ENCODE measurements at regions of chr7 and their contacts with region 1.

Region 1: DNA sequence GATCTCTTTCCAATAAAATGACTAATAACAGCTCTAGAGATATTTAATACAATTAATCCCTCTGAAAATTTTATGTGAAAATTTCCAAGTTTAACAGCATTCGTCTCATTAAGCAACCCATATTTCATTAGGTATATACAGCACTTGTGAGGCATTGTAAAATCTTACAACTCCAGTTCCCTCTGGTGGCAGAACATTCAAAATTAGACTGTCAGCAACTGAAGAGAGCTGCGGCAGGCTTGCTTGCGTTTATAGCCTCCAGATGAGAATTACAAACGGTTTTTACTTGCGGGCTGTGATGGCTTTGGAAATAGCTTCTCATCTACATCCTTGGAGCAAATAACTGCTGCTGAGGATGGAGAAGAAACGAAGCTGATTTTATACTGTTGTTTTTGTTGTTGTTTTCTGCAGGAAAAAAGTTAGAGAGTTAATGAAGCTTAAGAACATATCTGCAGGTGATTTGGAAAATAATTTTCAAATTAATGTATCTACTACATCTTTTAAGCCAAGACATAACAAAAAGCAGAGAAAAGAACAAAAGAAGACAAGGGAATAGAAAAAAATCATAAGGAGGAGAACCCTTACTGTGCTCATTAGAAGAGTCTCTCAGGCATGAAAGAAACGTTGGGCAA is 171.3 kb downstream of the MAGI2 start:
- DNase-seq: peak; percentile 39
- H3K4me3 ChIP-seq: peak overlapping the region; percentile 8; the same call in 1 of the 2 replicates
- H3K27ac ChIP-seq: peak overlapping the region; percentile 69
- H3K27me3 ChIP-seq: no peaks in the 10 kb centered on the region
- CTCF ChIP-seq: peak; percentile 62

Region 2: GRCh38 chr7:79096361-79096805 is 185.8 kb before region 1 on chr7:
- CTCF ChIA-PET with region 1: no interaction called
- POLR2A ChIA-PET with region 1: no interaction called
- DNase-seq: no peak
- H3K4me3 ChIP-seq: no peak overlapping the region
- H3K27ac ChIP-seq: no peak overlapping the region
- H3K27me3 ChIP-seq: no peaks in the 10 kb centered on the region
- CTCF ChIP-seq: no peak

Region 3: GRCh38 chr7:79272066-79272669 is 10.0 kb before region 1 on chr7:
- CTCF ChIA-PET with region 1: interaction called, 17 read pairs
- POLR2A ChIA-PET with region 1: no interaction called
- DNase-seq: no peak
- H3K4me3 ChIP-seq: no peak overlapping the region
- H3K27ac ChIP-seq: no peak overlapping the region
- H3K27me3 ChIP-seq: no peaks in the 10 kb centered on the region
- CTCF ChIP-seq: peak; percentile 65

Region 4: DNA sequence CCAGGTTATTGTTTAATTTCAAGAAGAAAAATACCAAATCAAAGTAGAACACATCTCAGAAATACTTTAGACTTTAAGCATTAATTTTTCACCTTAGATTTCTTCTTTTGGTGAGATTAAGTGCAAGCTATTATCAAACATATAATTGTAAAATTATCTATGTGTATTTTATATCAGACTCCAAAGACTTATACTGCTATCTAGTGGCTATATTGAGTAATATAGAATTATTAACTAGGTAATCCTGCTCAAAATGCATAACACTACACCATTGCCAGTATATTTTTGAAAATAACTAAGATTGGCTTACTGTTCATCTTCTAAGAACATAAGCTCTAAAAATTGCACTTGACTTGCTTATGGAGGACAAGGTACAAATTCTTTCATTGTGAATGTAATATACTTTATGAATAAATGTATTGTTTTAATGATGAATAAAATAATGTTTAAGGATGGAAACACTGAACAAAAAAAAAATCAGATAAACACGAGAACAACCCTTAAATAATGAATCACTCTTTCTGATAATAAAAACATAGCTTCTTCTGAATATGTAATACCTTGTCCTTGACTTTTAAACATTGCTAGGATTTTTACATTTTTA is 765.8 kb after region 1 on chr7:
- CTCF ChIA-PET with region 1: interaction called, 14 read pairs
- POLR2A ChIA-PET with region 1: no interaction called
- DNase-seq: no peak
- H3K4me3 ChIP-seq: no peak overlapping the region
- H3K27ac ChIP-seq: no peak overlapping the region
- H3K27me3 ChIP-seq: no peaks in the 10 kb centered on the region
- CTCF ChIP-seq: peak; percentile 50